Activated CD4-positive, alpha-beta memory T cell treated with anti-CD3 and anti-CD28 coated beads for 36 hours (primary cell): ENCODE measurements at regions of chr9 and their contacts with region 1.

Region 1: GRCh38 chr9:98807070-98807810 is at the start of gene GALNT12:
- DNase-seq: peak; percentile 64
- H3K4me3 Mint-ChIP-seq: peak within 1 kb of the TSS; percentile 76
- H3K27ac Mint-ChIP-seq: no peak within 1 kb of the TSS
- H3K4me1 Mint-ChIP-seq: peaks cover 35% of the 10 kb centered on the region
- H3K27me3 Mint-ChIP-seq: peaks cover 4% of the 10 kb centered on the region
- total RNA-seq, gene GALNT12: 6.3 to 7.9 TPM

Region 2: DNA sequence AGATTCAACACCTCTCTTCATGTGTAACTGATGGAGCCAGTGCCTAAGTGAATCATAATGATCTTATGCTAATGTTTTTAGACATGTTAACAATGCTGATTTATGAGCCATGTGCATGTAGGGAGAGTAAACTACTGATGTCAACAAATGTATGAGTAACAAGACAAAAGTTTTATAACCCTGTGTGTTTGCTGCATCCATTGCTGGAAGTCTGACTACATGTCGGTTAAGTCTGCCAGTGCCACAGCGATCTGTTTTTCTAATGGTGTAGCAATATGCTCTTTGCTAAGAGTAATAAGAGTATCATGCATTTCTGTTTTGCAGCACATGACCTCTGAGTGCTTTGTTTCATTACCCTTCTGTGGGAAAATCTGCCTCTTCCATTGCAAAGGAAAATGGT is 1332.2 kb before region 1 on chr9:
- CTCF ChIA-PET with region 1: no interaction called
- POLR2A ChIA-PET with region 1: no interaction called
- intact Hi-C with region 1: no loop called
- DNase-seq: no peak
- H3K4me3 Mint-ChIP-seq: no peak overlapping the region
- H3K27ac Mint-ChIP-seq: no peak overlapping the region
- H3K4me1 Mint-ChIP-seq: no peaks in the 10 kb centered on the region
- H3K27me3 Mint-ChIP-seq: no peaks in the 10 kb centered on the region

Region 3: GRCh38 chr9:98791147-98792095 is 15.8 kb before region 1 on chr9:
- CTCF ChIA-PET with region 1: interaction called, 14 read pairs
- POLR2A ChIA-PET with region 1: interaction called, 8 read pairs
- intact Hi-C with region 1: loop called (anchors 1 kb)
- DNase-seq: peak; percentile 77
- H3K4me3 Mint-ChIP-seq: no peak overlapping the region
- H3K27ac Mint-ChIP-seq: no peak overlapping the region
- H3K4me1 Mint-ChIP-seq: peaks cover 28% of the 10 kb centered on the region
- H3K27me3 Mint-ChIP-seq: no peaks in the 10 kb centered on the region

Region 4: DNA sequence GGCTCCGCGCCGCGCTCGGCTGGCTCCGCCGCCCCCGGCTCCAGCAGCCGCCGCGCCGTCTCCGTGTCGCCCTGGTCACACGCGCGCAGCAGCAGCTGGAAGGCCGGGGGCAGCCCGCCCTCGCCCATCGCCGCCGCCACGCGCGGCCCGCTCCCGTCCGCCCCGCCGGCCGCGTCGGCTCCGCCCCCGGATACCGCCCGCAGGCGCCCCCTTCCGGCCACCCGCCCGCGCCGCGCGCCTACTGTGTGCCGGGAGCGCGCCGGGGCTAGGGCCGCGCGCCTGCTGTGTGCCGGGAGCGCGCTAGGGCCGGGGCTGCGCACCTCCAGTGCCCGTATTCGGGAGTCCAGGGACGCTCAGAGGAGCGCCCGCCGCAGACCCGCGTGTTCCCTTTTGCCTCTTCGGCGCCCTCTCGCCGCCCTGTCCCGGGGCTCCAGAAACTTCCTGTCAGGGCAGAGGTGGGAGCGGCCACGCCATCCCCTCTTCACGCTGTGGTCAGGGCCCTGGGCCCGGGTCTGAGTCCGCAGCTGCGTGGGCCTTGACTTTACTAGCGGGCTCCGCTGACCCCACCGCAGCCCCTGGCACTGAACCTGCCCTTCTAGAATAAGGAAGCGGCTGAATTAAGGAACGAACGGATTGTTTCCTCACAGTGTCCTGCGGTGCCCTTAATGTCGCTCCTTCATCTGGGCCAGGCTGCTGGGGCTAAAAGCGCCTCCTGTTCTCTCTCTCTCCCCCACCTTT is 10.7 kb before region 1 on chr9 and contains the start of gene ANKS6:
- CTCF ChIA-PET with region 1: interaction called, 14 read pairs
- POLR2A ChIA-PET with region 1: interaction called, 8 read pairs
- intact Hi-C with region 1: loop called (anchors 1 kb)
- DNase-seq: peak; percentile 84
- H3K4me3 Mint-ChIP-seq: peak within 1 kb of the TSS; percentile 76
- H3K27ac Mint-ChIP-seq: peak within 1 kb of the TSS; percentile 54
- H3K4me1 Mint-ChIP-seq: peaks cover 27% of the 10 kb centered on the region
- H3K27me3 Mint-ChIP-seq: no peaks in the 10 kb centered on the region
- total RNA-seq, gene ANKS6: 13.0 to 16.0 TPM

Region 5: GRCh38 chr9:98887918-98888510 is 80.8 kb after region 1 on chr9:
- CTCF ChIA-PET with region 1: no interaction called
- POLR2A ChIA-PET with region 1: no interaction called
- intact Hi-C with region 1: no loop called
- DNase-seq: no peak
- H3K4me3 Mint-ChIP-seq: no peak overlapping the region
- H3K27ac Mint-ChIP-seq: no peak overlapping the region
- H3K4me1 Mint-ChIP-seq: no peaks in the 10 kb centered on the region
- H3K27me3 Mint-ChIP-seq: peaks cover 24% of the 10 kb centered on the region

Region 6: GRCh38 chr9:98998441-98999151 is 191.4 kb after region 1 on chr9:
- CTCF ChIA-PET with region 1: interaction called, 6 read pairs
- POLR2A ChIA-PET with region 1: no interaction called
- intact Hi-C with region 1: loop called (anchors 5 kb)
- DNase-seq: peak; percentile 73
- H3K4me3 Mint-ChIP-seq: no peak overlapping the region
- H3K27ac Mint-ChIP-seq: no peak overlapping the region
- H3K4me1 Mint-ChIP-seq: peaks cover 23% of the 10 kb centered on the region
- H3K27me3 Mint-ChIP-seq: peaks cover 7% of the 10 kb centered on the region

Region 7: GRCh38 chr9:99104459-99105151 is 297.4 kb after region 1 on chr9 and contains the start of gene TGFBR1:
- CTCF ChIA-PET with region 1: no interaction called
- POLR2A ChIA-PET with region 1: no interaction called
- intact Hi-C with region 1: loop called (anchors 10 kb)
- DNase-seq: peak; percentile 94
- H3K4me3 Mint-ChIP-seq: peak within 1 kb of the TSS; percentile 80
- H3K27ac Mint-ChIP-seq: peak within 1 kb of the TSS; percentile 67
- H3K4me1 Mint-ChIP-seq: peaks cover 41% of the 10 kb centered on the region
- H3K27me3 Mint-ChIP-seq: no peaks in the 10 kb centered on the region
- total RNA-seq, gene TGFBR1: 25.4 to 26.3 TPM

Region 8: GRCh38 chr9:99803694-99804093 is 996.5 kb after region 1 on chr9:
- CTCF ChIA-PET with region 1: no interaction called
- POLR2A ChIA-PET with region 1: no interaction called
- intact Hi-C with region 1: no loop called
- DNase-seq: no peak
- H3K4me3 Mint-ChIP-seq: no peak overlapping the region
- H3K27ac Mint-ChIP-seq: no peak overlapping the region
- H3K4me1 Mint-ChIP-seq: peaks cover 5% of the 10 kb centered on the region
- H3K27me3 Mint-ChIP-seq: peaks cover 3% of the 10 kb centered on the region